A549 (cell line): ENCODE measurements at regions of chr6 and their contacts with region 1.

Region 1: DNA sequence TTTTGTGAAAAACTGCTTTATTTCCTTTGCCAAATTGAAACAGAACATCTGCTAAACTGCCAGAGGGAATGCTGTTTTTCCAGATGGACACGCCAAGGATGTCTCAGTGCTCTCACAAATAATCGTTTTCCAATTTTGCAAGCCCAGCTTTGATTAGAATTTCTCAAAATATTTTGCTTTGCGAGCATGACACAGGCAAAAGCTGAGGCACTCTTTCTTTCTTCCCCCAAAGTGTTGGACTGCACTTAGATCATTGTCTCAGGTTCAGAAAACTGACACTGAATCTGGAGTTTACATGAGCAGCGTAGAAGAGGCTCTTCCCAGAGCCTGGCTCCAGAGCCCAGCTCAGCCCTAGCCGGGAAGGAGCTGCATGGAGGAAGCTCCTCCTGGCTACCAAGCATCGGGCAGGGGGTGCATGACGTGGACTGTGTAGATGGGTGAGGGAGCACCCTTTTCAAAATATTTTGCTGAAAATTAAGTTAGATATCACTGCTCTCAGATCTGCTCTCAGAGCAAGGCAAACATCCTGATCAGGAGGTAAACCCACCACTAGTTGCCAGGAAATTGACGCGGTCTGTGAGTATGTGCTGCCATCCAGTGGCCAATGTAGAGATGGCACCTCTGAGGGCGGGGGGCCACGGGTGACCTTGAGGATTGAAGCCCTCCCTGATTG is 107.5 kb downstream of the SLC22A3 start:
- DNase-seq: peak; percentile 49 to 57
- ATAC-seq: peak; percentile 80 to 84
- H3K4me3 ChIP-seq: no peak overlapping the region
- H3K27ac ChIP-seq: peak overlapping the region; percentile 74 to 83
- H3K4me1 ChIP-seq: peaks cover 12% of the 10 kb centered on the region
- CTCF ChIP-seq: peak; percentile 87
- EP300 ChIP-seq: no peak
- POLR2A ChIP-seq: no peak
- RAD21 ChIP-seq: peak; percentile 94 to 95

Region 2: DNA sequence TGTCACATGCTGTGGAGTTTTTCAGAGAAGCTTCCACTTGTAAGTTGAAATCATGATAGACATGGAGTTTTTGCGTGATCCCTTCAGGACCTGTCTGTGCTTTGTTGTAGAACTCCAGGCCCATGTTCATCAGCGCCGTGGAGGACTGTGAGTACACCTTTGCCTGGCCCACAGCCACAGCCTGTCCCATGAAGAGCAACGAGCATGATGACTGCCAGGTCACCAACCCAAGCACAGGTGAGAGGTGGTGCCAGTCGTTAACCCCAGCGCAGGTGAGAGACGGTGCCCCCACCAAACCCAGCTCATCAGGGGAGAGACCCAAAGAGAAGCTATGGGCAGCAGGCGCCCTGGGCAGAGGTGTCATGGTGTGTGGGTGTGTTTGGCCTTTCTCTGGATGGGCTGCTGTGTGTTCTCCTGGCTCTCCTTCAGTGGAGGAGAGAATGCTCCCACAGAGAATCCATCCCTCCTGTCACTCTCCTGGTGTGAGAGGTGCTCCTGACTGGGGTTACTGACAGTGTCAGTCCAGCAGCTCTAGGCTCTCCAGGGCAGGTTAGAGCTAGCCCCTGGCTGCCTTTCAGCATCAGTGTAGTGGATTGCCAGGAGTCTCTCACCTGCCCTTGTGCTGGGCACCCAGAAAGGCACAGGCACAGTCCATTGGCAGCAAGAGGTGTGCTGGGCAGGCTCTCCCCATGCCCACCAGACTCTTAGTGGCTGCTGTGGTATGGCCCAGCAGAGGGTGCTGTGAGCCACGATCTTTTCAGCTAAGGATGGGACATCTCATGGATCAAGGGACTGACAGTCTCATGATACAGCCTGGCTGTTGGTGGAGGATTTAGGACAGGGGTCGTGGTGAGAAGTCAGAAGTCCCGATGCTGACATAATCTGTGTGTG is 383.6 kb before region 1 on chr6:
- CTCF ChIA-PET with region 1: interaction called, 12 read pairs
- POLR2A ChIA-PET with region 1: no interaction called
- DNase-seq: peak in 1 of 2 experiments; percentile 27
- ATAC-seq: peak; percentile 76 to 89; a peak in 5 of 6 replicates
- H3K4me3 ChIP-seq: no peak overlapping the region
- H3K27ac ChIP-seq: no peak overlapping the region
- H3K4me1 ChIP-seq: no peaks in the 10 kb centered on the region
- CTCF ChIP-seq: peak; percentile 15; the same call in 1 of the 3 replicates
- EP300 ChIP-seq: no peak
- POLR2A ChIP-seq: no peak
- RAD21 ChIP-seq: peak; percentile 25 to 41; a peak in 2 of 5 replicates

Region 3: GRCh38 chr6:160088069-160088783 is 367.5 kb before region 1 on chr6:
- CTCF ChIA-PET with region 1: interaction called, 61 read pairs
- POLR2A ChIA-PET with region 1: no interaction called
- DNase-seq: peak; percentile 55 to 80
- ATAC-seq: peak; percentile 88 to 93
- H3K4me3 ChIP-seq: no peak overlapping the region
- H3K27ac ChIP-seq: 0 out of 6 replicates have a peak overlapping the region, but pooled peaks of 1 of the 2 experiments have one; percentile 4
- H3K4me1 ChIP-seq: 0 out of 3 replicates have a peak, but pooled peaks cover 3% of the 10 kb centered on the region
- CTCF ChIP-seq: peak; percentile 74
- EP300 ChIP-seq: no peak
- POLR2A ChIP-seq: no peak
- RAD21 ChIP-seq: peak; percentile 78 to 80

Region 4: DNA sequence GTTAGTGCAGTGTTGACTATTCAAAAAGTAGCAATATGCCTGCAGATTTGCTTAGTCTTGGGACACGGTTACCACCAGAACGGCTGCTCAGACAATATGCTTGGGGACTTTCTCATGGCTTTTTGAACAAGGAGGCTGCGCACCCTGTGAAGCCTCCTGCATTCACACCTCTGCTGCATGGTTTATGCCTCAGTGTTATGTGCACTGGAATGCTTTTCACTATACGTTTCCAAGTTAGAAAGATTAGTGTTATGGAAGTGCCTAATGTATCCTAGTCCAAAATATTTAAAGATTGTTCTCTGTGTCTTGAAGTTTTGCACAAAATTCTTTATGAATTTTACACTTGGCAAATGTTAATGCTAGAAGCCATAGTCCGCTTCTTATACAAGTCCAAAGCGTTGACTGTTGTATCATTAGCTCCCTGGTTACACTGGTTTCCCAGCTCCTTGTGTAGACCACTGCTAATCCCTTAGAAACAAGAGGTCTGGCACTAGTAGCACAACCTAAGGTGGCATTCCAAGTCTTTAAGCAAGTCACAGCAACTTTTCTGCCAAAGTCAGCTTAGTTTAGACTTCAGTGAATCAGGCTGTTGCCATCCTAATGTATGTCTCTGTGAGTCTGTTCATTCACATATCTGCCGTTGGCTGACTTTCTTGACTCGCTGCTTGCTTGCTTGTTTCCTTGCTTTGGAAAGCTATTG is 360.4 kb before region 1 on chr6:
- CTCF ChIA-PET with region 1: interaction called, 14 read pairs
- POLR2A ChIA-PET with region 1: no interaction called
- DNase-seq: no peak
- ATAC-seq: no peak
- H3K4me3 ChIP-seq: no peak overlapping the region
- H3K27ac ChIP-seq: no peak overlapping the region
- H3K4me1 ChIP-seq: peaks cover 1% of the 10 kb centered on the region; the same call in 1 of the 3 replicates
- CTCF ChIP-seq: no peak
- EP300 ChIP-seq: no peak
- POLR2A ChIP-seq: no peak
- RAD21 ChIP-seq: no peak

Region 5: GRCh38 chr6:160137989-160138835 is 317.5 kb before region 1 on chr6:
- CTCF ChIA-PET with region 1: interaction called, 30 read pairs
- POLR2A ChIA-PET with region 1: no interaction called
- DNase-seq: peak; percentile 28 to 65
- ATAC-seq: peak; percentile 46 to 65; a peak in 4 of 6 replicates
- H3K4me3 ChIP-seq: no peak overlapping the region
- H3K27ac ChIP-seq: peak overlapping the region; percentile 75 to 87
- H3K4me1 ChIP-seq: peaks cover 51% of the 10 kb centered on the region
- CTCF ChIP-seq: peak; percentile 62
- EP300 ChIP-seq: no peak
- POLR2A ChIP-seq: no peak
- RAD21 ChIP-seq: peak; percentile 79 to 91

Region 6: GRCh38 chr6:160398674-160399271 is 56.9 kb before region 1 on chr6:
- CTCF ChIA-PET with region 1: no interaction called
- POLR2A ChIA-PET with region 1: no interaction called
- DNase-seq: no peak
- ATAC-seq: no peak
- H3K4me3 ChIP-seq: no peak overlapping the region
- H3K27ac ChIP-seq: peak overlapping the region; percentile 85 to 99
- H3K4me1 ChIP-seq: peaks cover 67% of the 10 kb centered on the region
- CTCF ChIP-seq: no peak
- EP300 ChIP-seq: no peak
- POLR2A ChIP-seq: no peak
- RAD21 ChIP-seq: no peak

Region 7: GRCh38 chr6:160442151-160442550 is 13.5 kb before region 1 on chr6:
- CTCF ChIA-PET with region 1: interaction called, 13 read pairs
- POLR2A ChIA-PET with region 1: no interaction called
- DNase-seq: no peak
- ATAC-seq: no peak
- H3K4me3 ChIP-seq: no peak overlapping the region
- H3K27ac ChIP-seq: no peak overlapping the region
- H3K4me1 ChIP-seq: no peaks in the 10 kb centered on the region
- CTCF ChIP-seq: no peak
- EP300 ChIP-seq: no peak
- POLR2A ChIP-seq: no peak
- RAD21 ChIP-seq: no peak

Region 8: DNA sequence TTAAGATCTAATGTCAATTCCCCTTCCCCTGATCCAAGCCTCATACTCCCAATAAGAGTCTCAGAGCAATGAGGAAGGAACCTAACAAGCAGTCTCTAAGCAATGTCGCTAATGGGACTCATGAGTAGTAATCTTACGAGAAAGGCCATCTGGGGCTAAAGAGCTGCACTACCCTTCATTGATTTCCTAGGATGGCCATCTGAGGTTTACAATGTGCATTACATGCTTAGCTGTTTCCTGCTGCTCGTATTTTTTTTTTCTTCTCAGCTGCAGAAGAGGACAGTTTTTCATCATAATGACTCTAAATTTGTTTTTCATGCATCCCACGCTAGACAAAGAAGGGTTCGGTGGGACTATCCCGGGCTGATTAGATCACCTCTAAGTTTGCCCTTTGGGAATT is 89.1 kb after region 1 on chr6:
- CTCF ChIA-PET with region 1: no interaction called
- POLR2A ChIA-PET with region 1: no interaction called
- DNase-seq: no peak
- ATAC-seq: no peak
- H3K4me3 ChIP-seq: no peak overlapping the region
- H3K27ac ChIP-seq: no peak overlapping the region
- H3K4me1 ChIP-seq: no peaks in the 10 kb centered on the region
- CTCF ChIP-seq: no peak
- EP300 ChIP-seq: no peak
- POLR2A ChIP-seq: no peak
- RAD21 ChIP-seq: no peak